GM12878 (cell line): ENCODE measurements at regions of chr5 and their contacts with region 1.

Region 1: GRCh38 chr5:68644971-68645370 is 429.4 kb downstream of the PIK3R1 start:
- DNase-seq: peak; percentile 83
- ATAC-seq: peak; percentile 97
- H3K4me3 ChIP-seq: no peak overlapping the region
- H3K27ac ChIP-seq: no peak overlapping the region
- H3K4me1 ChIP-seq: peaks cover 13% of the 10 kb centered on the region; the same call in 1 of the 2 replicates
- H3K27me3 ChIP-seq: no peaks in the 10 kb centered on the region
- CTCF ChIP-seq: no peak
- EP300 ChIP-seq: peak; percentile 14 to 57; a peak in 2 of 4 replicates
- POLR2A ChIP-seq: no peak
- RAD21 ChIP-seq: peak; percentile 36

Region 2: DNA sequence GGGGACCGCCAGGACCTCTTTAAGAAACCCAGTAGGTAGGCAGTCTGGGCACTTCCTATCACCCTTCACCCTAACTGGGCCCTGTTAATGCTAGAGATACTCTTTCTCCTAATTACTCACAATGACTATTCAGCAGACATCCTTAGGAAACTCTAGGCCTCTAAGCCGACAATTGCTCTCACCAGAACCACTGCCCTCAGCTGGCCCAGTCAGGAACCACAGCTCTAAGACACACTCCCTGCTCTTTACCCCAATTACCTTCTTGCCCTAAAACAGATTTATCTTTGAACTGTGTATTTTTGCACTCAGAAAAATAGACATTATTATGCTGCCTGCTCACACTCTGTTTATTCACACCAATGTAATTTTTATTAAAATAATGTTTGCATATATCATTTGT is 16.3 kb after region 1 on chr5:
- CTCF ChIA-PET with region 1: interaction called, 13 read pairs
- POLR2A ChIA-PET with region 1: no interaction called
- RAD21 ChIA-PET with region 1: interaction called, 3 read pairs
- SMC1A ChIA-PET with region 1: interaction called, 7 read pairs
- in situ Hi-C with region 1: no loop called
- intact Hi-C with region 1: no loop called
- DNase-seq: no peak
- ATAC-seq: peak; percentile 83
- H3K4me3 ChIP-seq: no peak overlapping the region
- H3K27ac ChIP-seq: no peak overlapping the region
- H3K4me1 ChIP-seq: no peaks in the 10 kb centered on the region
- H3K27me3 ChIP-seq: peaks cover 0 to 3% of the 10 kb centered on the region in 2 experiments; a peak in 2 of 4 replicates
- CTCF ChIP-seq: peak; percentile 43 to 55 (median 50); a peak in 5 of 6 replicates
- EP300 ChIP-seq: no peak
- POLR2A ChIP-seq: no peak
- RAD21 ChIP-seq: peak; percentile 70